GM23248 (cell line): ENCODE measurements at regions of chr12 and their contacts with region 1.

Region 1: GRCh38 chr12:15532364-15532977 is 210.2 kb downstream of the PTPRO start:
- DNase-seq: peak; percentile 84
- H3K4me3 ChIP-seq: no peak overlapping the region
- H3K27ac ChIP-seq: no peak overlapping the region
- H3K4me1 ChIP-seq: peaks cover 22% of the 10 kb centered on the region
- H3K27me3 ChIP-seq: no peaks in the 10 kb centered on the region

Region 2: DNA sequence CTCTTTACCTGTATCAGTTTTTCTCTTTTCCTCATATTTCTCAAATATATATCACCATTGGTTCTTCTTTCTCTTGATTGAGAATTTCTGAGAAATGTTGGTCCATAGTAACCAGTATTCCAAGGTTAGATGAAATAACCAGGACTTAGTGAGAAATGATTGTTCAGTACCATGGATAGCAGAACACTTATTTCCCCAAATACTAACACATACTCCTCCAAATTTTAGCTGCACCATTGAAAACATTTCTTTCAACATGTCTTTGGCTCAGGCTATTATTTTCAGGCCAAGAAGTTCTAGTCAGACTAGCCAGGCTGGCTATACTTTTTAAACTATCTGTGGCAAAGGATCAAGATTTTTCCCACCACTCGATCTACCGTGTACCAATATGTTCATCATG is 96.9 kb before region 1 on chr12:
- in situ Hi-C with region 1: no loop called
- DNase-seq: peak; percentile 25
- H3K4me3 ChIP-seq: no peak overlapping the region
- H3K27ac ChIP-seq: no peak overlapping the region
- H3K4me1 ChIP-seq: no peaks in the 10 kb centered on the region
- H3K27me3 ChIP-seq: 0 out of 2 replicates have a peak, but pooled peaks cover 4% of the 10 kb centered on the region

Region 3: GRCh38 chr12:15584366-15585041 is 52.0 kb after region 1 on chr12:
- in situ Hi-C with region 1: loop called (anchors 5 kb)
- DNase-seq: peak; percentile 77
- H3K4me3 ChIP-seq: no peak overlapping the region
- H3K27ac ChIP-seq: no peak overlapping the region
- H3K4me1 ChIP-seq: no peaks in the 10 kb centered on the region
- H3K27me3 ChIP-seq: no peaks in the 10 kb centered on the region

Region 4: DNA sequence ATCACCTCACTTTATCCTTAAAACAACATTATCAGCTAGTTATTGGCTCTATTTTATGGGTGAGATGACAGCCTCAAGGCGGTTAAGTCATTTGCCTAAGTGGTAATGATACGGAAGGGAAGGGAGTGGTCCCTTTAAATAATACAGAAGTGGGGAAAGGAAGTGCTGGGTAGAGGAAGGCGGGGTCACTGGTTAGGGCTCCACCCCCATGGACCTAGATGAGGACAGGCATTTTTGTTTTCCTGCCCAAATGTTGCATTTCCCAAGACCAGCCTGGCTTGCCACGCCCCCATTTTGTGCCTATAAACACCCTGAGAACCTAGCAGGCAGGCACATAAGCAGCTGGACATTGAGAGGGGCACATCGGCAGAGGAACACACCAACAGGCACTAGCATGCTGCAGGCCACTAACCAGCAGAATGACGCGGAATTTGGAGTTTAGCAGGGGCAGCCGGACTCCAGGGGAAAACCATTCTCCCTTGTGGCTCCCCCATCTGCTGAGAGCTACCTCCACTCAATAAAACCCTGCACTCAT is 155.8 kb after region 1 on chr12:
- in situ Hi-C with region 1: no loop called
- DNase-seq: no peak
- H3K4me3 ChIP-seq: no peak overlapping the region
- H3K27ac ChIP-seq: no peak overlapping the region
- H3K4me1 ChIP-seq: peaks cover 64% of the 10 kb centered on the region
- H3K27me3 ChIP-seq: no peaks in the 10 kb centered on the region